ENCODE measurements at regions of chr12 and their contacts with region 1.

Region 1: DNA sequence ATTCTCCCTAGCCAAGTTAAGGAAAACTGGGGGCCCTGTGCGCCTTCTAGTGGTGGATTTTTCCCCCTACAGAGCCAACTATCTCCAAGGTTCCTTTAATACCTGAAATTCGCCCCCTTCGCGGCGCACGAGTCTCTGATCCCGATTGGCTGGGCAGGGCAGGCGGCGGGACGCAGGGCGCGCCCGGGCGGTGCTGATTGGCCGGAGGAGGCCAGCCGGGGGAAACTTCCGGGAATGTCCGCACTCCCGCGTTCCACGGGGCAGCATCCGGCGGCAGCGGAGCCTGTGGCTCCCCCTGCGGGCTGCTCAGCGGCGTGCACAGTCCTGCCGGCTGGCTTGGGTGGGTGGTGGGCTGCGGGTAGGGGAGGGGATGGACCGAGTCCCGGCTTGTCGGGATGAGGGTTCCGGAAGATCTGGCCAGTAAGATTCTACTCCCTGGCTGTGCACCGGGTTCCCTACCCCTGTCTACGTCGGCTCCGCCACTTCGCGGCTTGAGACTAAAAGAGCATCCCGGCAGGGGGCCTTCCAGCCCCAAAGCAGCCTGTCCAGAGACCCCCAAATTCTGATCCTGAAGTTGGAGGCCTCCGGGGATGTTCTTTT is at the start of gene NABP2:
- DNase-seq: peak; percentile 96
- H3K4me3 ChIP-seq: peak within 1 kb of the TSS; percentile 37 to 89 (median 83)
- H3K27ac ChIP-seq: peak within 1 kb of the TSS in 1 of 2 experiments; percentile 83
- H3K4me1 ChIP-seq: peaks cover 9 to 49% (median 42%) of the 10 kb centered on the region in 4 experiments
- H3K27me3 ChIP-seq: no peaks in the 10 kb centered on the region

Region 2: DNA sequence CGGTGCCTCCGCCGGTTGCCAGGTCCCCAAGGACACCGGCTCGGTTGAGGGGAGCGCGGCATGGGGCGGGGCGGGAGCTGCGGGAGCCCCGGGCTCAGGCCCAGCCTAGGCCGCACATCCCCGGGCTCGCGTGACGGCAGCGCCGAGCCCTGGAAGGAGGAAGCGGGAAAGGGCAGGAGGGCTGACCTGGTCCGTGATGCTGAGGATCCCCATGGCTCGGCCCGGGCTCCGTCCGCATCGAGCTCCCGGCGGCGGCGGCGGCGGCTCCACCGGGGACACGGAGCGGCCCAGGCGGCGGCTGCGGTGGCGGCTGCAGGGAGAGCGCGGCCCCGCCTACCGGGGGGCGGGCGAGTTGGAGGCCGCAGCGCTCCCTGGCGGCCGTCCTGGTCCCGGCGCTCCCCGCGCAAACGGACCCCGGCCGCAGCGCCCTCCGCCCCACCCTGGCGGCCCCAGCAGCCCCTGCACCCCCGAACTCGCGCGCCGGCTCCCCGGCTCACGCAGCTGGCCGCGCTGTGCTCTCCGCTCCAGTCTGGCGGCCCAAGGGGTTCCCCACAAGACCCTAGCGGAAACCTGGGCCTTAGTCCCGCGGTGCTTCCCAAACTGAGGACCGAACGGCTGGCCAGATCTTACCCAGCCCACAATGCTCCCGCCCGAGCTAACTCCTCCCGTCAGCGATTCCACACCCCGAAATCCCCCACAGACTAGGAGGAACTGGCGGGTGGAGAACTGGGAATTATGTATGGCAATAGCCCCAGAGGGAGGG is 34.0 kb after region 1 on chr12 and contains the start of gene ANKRD52:
- CTCF ChIA-PET with region 1: interaction called, 24 read pairs
- POLR2A ChIA-PET with region 1: interaction called, 5 read pairs
- DNase-seq: peak; percentile 77 to 88 (median 87)
- H3K4me3 ChIP-seq: peak within 1 kb of the TSS; percentile 74 to 86 (median 84)
- H3K27ac ChIP-seq: peak within 1 kb of the TSS; percentile 46 to 74
- H3K4me1 ChIP-seq: peaks cover 0 to 19% (median 15%) of the 10 kb centered on the region in 4 experiments
- H3K27me3 ChIP-seq: no peaks in the 10 kb centered on the region

Measured in common myeloid progenitor, CD34-positive (primary cell).